Sciatic nerve (tissue), 2 donors: ENCODE measurements at regions of chr15 and their contacts with region 1.

Region 1: GRCh38 chr15:62173215-62173614 is 8.1 kb upstream of the C2CD4B start:
- DNase-seq: no peak
- ATAC-seq: no peak

Region 2: DNA sequence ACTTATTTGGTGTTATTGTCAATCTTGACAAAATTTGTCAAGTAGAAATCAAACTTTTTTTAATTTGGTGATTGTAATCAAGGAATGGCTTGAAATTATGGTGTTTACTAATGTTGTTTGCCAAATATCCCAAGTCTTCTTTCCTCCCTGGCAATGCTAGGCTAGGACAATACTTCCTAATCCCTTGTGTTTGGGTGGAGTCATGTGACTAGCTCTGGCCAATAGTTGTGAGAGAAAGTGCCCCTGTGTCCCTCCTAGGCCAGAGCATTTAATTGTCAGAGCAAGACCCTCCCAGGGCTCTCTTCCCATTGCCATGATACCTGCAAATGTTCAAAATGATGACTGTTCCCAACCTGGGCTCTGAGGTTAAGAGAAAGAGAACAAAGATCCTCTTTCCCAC is 1908.2 kb before region 1 on chr15:
- intact Hi-C with region 1: loop called (anchors 5 kb)
- DNase-seq: no peak
- ATAC-seq: no peak